Heart left ventricle (tissue), 16 donors: ENCODE measurements at regions of chr14 and their contacts with region 1.

Region 1: GRCh38 chr14:60485598-60486251 is at the start of gene C14orf39:
- DNase-seq: no peak
- ATAC-seq: peak in 1 of 4 donors; percentile 20
- H3K4me3 ChIP-seq: peak within 1 kb of the TSS in 4 of 12 donors; percentile 5 to 24 (median 22)
- H3K27ac ChIP-seq: no peak within 1 kb of the TSS
- H3K4me1 ChIP-seq: peaks cover 0 to 11% (median 0%) of the 10 kb centered on the region in 12 donors
- H3K27me3 ChIP-seq: peaks cover 13 to 85% (median 35%) of the 10 kb centered on the region in 9 donors
- CTCF ChIP-seq: no peak
- POLR2A ChIP-seq: no peak
- total RNA-seq, gene C14orf39: not detected

Region 2: GRCh38 chr14:59771577-59771976 is 714.1 kb before region 1 on chr14:
- intact Hi-C with region 1: no loop called
- DNase-seq: no peak
- ATAC-seq: no peak
- H3K4me3 ChIP-seq: no peak overlapping the region
- H3K27ac ChIP-seq: no peak overlapping the region
- H3K4me1 ChIP-seq: peaks cover 0 to 13% (median 0%) of the 10 kb centered on the region in 12 donors
- H3K27me3 ChIP-seq: peaks cover 0 to 3% (median 0%) of the 10 kb centered on the region in 9 donors
- CTCF ChIP-seq: no peak
- POLR2A ChIP-seq: no peak

Region 3: DNA sequence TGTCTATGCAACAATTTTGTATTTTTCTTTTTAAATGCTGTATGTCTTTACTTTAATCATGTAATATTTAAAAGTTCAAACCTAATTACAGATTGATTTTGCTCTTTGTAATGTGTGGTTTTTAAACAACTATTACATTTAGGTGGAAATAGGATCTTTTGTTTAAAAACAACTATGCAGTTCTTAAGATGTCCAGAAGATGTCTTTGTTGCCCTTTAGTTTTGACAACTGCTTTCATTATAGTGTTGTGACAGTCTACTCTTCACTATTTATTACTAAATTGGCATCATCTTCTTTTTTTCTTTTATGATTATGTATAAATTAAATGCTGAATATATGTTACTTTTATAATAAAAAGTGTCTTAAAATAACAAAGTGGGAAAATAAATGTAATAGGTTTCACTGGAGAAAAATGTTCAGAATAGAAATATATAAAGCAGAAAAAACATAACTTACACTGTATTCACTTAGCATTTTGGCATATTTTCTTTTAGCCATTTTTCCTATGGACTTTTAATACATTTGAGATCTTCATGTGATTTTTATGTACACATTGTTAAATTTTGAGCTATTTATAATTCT is 421.1 kb before region 1 on chr14:
- intact Hi-C with region 1: loop called in 1 of 10 experiments (anchors 10 kb)
- DNase-seq: no peak
- ATAC-seq: no peak
- H3K4me3 ChIP-seq: no peak overlapping the region
- H3K27ac ChIP-seq: no peak overlapping the region
- H3K4me1 ChIP-seq: no peaks in the 10 kb centered on the region
- H3K27me3 ChIP-seq: no peaks in the 10 kb centered on the region
- CTCF ChIP-seq: peak; percentile 38 to 78 (median 66)
- POLR2A ChIP-seq: no peak